ENCODE measurements at regions of chr20 and their contacts with region 1.

Region 1: GRCh38 chr20:49179368-49180277 is 8.5 kb downstream of the STAU1 start:
- DNase-seq: no peak
- H3K4me3 Mint-ChIP-seq: peak overlapping the region; percentile 15
- H3K27ac Mint-ChIP-seq: peak overlapping the region; percentile 54
- H3K4me1 Mint-ChIP-seq: peaks cover 40% of the 10 kb centered on the region
- H3K27me3 Mint-ChIP-seq: no peaks in the 10 kb centered on the region
- CTCF ChIP-seq: no peak

Region 2: GRCh38 chr20:49148601-49149000 is 31.0 kb before region 1 on chr20:
- CTCF ChIA-PET with region 1: no interaction called
- intact Hi-C with region 1: loop called (anchors 5 kb)
- DNase-seq: no peak
- H3K4me3 Mint-ChIP-seq: no peak overlapping the region
- H3K27ac Mint-ChIP-seq: no peak overlapping the region
- H3K4me1 Mint-ChIP-seq: no peaks in the 10 kb centered on the region
- H3K27me3 Mint-ChIP-seq: no peaks in the 10 kb centered on the region
- CTCF ChIP-seq: no peak